ENCODE measurements at regions of chr17 and their contacts with region 1.

Region 1: GRCh38 chr17:38584350-38584925 is 21.3 kb downstream of the SRCIN1 start:
- DNase-seq: peak; percentile 39
- H3K4me3 Mint-ChIP-seq: no peak overlapping the region
- H3K27ac Mint-ChIP-seq: no peak overlapping the region
- H3K4me1 Mint-ChIP-seq: peaks cover 9% of the 10 kb centered on the region
- H3K27me3 Mint-ChIP-seq: peaks cover 68% of the 10 kb centered on the region

Region 2: DNA sequence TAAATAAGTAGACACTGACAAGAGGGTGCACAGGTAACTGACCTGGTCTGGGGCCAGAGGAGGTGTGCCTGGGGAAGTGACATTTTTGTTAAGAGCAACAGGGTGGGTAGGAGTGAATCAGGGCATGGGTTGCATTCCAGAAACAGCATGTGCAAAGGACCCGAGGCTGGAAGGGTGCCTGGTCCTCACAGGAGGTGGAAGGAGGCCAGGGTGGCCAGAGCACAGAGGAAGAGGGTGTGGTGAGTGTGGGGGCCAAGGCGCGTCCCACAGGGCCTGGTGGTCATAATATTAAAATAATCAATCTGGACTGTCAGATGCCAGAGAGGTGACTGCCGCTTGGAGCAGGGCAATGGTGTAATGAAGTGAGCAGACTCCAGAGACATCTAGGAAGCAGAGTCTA is 141.9 kb before region 1 on chr17:
- intact Hi-C with region 1: no loop called
- DNase-seq: no peak
- H3K4me3 Mint-ChIP-seq: no peak overlapping the region
- H3K27ac Mint-ChIP-seq: no peak overlapping the region
- H3K4me1 Mint-ChIP-seq: no peaks in the 10 kb centered on the region
- H3K27me3 Mint-ChIP-seq: peaks cover 13% of the 10 kb centered on the region

Region 3: GRCh38 chr17:38509008-38509771 is 75.2 kb before region 1 on chr17:
- intact Hi-C with region 1: loop called (anchors 5 kb)
- DNase-seq: peak; percentile 63
- H3K4me3 Mint-ChIP-seq: peak overlapping the region; percentile 79
- H3K27ac Mint-ChIP-seq: peak overlapping the region; percentile 84
- H3K4me1 Mint-ChIP-seq: peaks cover 6% of the 10 kb centered on the region
- H3K27me3 Mint-ChIP-seq: peaks cover 39% of the 10 kb centered on the region

Region 4: GRCh38 chr17:38557836-38558727 is 26.4 kb before region 1 on chr17:
- intact Hi-C with region 1: loop called (anchors 1 kb)
- DNase-seq: peak; percentile 87
- H3K4me3 Mint-ChIP-seq: peak overlapping the region; percentile 95
- H3K27ac Mint-ChIP-seq: peak overlapping the region; percentile 69
- H3K4me1 Mint-ChIP-seq: peaks cover 27% of the 10 kb centered on the region
- H3K27me3 Mint-ChIP-seq: peaks cover 48% of the 10 kb centered on the region

Region 5: DNA sequence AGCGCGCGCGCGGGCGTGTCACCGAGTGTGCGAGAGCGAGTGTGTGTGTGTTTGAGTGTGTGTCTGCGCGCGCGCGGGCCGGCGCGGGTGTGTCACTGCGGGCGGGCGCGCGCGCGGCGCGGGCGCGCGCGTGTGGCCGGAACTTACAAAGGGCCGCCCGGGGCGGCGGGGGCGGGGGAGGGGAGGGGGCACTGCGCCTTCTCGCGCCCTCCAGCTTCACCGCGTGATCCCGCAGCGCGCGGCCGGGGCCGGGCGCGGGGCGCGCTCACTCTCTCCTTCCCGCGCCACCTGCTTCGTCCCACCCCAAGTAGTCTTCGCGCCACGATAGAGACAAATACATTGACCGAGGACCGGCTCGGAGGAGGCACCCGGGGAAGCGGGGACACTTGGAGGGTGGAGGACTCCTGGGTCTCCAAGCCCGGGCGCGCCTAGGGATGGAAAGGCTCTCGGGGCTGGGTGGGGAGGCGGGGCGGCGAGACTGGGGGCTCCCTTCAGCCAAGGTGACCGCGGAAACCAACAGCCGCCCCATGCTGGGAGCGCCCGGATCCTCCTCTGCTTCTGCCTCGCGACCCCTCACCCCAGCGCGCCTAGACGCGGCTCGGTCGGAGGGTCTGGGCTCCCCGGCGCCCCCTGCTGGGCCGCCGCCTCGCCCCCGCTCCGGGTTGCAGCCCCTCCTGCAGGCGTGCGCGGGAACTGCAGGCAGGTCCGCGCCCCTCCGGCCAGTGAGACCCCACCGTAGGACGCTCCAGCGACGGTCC is 21.6 kb after region 1 on chr17 and contains the start of gene SRCIN1:
- intact Hi-C with region 1: no loop called
- DNase-seq: peak; percentile 44
- H3K4me3 Mint-ChIP-seq: peak within 1 kb of the TSS; percentile 73
- H3K27ac Mint-ChIP-seq: peak within 1 kb of the TSS; percentile 23
- H3K4me1 Mint-ChIP-seq: peaks cover 5% of the 10 kb centered on the region
- H3K27me3 Mint-ChIP-seq: peaks cover 69% of the 10 kb centered on the region
- total RNA-seq, gene SRCIN1: 0.22 and 0.44 TPM in 2 replicates